Activated CD8-positive, alpha-beta memory T cell treated with anti-CD3 and anti-CD28 coated beads, Interleukin-2, amount 10 ng/mL, durations not matched to agents 7 days and 5 days (primary cell): ENCODE measurements at regions of chr19 and their contacts with region 1.

Region 1: GRCh38 chr19:2269244-2269947 is 12.6 kb downstream of the PEAK3 start:
- DNase-seq: peak; percentile 99
- ATAC-seq: peak; percentile 77
- H3K4me3 Mint-ChIP-seq: peak overlapping the region; percentile 90
- H3K27ac Mint-ChIP-seq: peak overlapping the region; percentile 94
- H3K4me1 Mint-ChIP-seq: peaks cover 39% of the 10 kb centered on the region
- H3K27me3 Mint-ChIP-seq: no peaks in the 10 kb centered on the region

Region 2: GRCh38 chr19:2135474-2136402 is 133.7 kb before region 1 on chr19:
- CTCF ChIA-PET with region 1: no interaction called
- DNase-seq: no peak
- ATAC-seq: no peak
- H3K4me3 Mint-ChIP-seq: no peak overlapping the region
- H3K27ac Mint-ChIP-seq: no peak overlapping the region
- H3K4me1 Mint-ChIP-seq: no peaks in the 10 kb centered on the region
- H3K27me3 Mint-ChIP-seq: no peaks in the 10 kb centered on the region

Region 3: DNA sequence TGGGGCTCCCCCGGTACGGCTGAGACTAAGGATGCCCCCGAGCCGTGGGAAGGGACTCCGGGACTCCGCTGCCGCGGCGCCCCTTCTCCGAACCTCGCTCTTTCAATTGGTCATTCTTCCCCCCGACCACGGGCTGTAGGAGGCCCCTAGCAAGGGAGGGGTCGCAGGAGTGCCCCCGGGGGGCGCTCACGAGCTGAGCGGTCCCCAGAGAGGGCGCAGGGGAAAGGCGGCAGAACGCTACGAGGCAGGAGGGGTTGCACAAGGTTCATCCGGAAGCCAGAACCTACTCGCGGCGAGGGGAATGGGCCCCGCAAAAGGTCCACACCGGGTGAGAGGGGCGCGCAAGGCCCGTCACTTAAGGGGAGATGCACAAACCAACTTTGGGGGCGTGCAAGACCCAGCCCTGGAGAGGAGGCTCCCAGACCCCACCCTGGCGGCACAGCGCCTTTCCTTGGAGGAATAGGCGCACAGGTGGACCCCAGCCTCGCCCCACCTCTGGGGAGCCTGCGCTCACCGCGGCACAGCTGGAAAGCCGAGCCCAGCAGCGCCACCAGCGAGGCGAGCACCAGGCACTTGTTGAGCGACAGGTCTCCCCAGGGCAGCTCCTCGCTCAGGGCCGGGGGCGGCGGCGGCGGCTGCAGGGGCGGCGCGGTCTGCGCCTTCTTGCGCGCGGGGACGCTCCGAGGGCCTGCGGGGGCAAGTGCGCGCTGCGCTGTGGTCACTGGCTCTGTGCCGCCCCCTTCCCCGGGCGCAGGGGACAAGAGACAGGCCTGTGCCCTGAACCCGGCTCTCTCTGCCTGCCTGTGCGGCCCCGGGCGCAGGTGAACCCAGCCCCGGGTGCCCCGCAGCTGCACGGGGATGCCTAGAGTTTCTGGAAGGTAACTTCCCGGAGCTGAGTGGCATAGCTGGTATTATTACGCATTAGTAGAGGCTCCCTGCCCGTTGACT is 16.0 kb before region 1 on chr19:
- CTCF ChIA-PET with region 1: interaction called, 12 read pairs
- DNase-seq: peak; percentile 55
- ATAC-seq: peak; percentile 10
- H3K4me3 Mint-ChIP-seq: peak overlapping the region; percentile 24
- H3K27ac Mint-ChIP-seq: no peak overlapping the region
- H3K4me1 Mint-ChIP-seq: peaks cover 16% of the 10 kb centered on the region
- H3K27me3 Mint-ChIP-seq: peaks cover 24% of the 10 kb centered on the region

Region 4: GRCh38 chr19:2289714-2290435 is 20.5 kb after region 1 on chr19:
- CTCF ChIA-PET with region 1: interaction called, 52 read pairs
- DNase-seq: peak; percentile 85
- ATAC-seq: peak; percentile 78
- H3K4me3 Mint-ChIP-seq: peak overlapping the region; percentile 78
- H3K27ac Mint-ChIP-seq: peak overlapping the region; percentile 91
- H3K4me1 Mint-ChIP-seq: peaks cover 25% of the 10 kb centered on the region
- H3K27me3 Mint-ChIP-seq: peaks cover 5% of the 10 kb centered on the region

Region 5: GRCh38 chr19:2391118-2391725 is 121.8 kb after region 1 on chr19:
- CTCF ChIA-PET with region 1: interaction called, 22 read pairs
- DNase-seq: peak; percentile 51
- ATAC-seq: peak; percentile 42
- H3K4me3 Mint-ChIP-seq: no peak overlapping the region
- H3K27ac Mint-ChIP-seq: no peak overlapping the region
- H3K4me1 Mint-ChIP-seq: peaks cover 19% of the 10 kb centered on the region
- H3K27me3 Mint-ChIP-seq: peaks cover 21% of the 10 kb centered on the region